ENCODE measurements at regions of chr6 and their contacts with region 1.

Region 1: DNA sequence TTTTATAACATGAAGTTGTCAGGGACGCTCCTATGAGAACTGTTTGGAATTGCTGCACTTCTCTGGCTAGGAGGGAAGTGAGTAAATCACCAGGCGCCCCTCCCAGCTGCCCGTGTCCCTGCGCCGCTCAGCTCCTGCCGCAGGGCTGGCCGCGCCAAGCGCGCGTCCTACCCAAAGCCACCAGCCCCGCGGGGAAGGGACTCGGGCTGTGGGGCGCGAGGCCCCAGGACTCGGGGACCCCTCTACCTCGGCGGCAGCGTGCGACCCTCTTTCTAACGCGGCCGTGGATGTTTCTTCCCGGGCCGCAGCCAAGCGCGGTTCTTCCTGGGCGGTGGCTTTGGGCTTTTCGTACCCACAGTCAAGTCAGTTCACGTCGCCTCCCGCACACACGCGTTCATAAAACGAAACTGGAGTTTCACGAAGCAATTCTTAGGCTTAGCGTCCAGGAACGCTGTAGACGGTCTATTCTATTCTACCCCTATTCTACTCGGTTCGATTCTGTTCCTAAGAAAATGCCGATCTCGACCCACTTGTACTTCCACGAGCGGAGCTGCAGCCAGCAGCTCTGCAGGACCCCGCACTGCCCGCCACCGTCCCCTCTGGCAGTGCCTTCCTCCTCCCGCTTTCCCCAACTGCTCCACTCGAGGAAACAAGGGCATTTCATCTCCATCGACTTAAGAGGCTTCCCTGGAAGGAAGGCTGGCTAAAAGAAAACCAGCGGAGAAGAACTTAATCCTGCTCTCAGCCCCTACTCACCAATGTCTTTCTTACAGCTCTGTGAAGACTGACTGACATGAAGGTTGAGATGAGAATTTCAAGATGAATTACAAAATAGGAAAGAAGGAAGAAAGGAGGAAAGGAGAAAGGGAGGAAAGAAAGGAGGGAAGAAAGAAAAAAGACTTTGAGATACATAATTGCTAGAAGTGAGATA is 15.4 kb downstream of the FOXC1 start:
- DNase-seq: peak; percentile 80

Region 2: DNA sequence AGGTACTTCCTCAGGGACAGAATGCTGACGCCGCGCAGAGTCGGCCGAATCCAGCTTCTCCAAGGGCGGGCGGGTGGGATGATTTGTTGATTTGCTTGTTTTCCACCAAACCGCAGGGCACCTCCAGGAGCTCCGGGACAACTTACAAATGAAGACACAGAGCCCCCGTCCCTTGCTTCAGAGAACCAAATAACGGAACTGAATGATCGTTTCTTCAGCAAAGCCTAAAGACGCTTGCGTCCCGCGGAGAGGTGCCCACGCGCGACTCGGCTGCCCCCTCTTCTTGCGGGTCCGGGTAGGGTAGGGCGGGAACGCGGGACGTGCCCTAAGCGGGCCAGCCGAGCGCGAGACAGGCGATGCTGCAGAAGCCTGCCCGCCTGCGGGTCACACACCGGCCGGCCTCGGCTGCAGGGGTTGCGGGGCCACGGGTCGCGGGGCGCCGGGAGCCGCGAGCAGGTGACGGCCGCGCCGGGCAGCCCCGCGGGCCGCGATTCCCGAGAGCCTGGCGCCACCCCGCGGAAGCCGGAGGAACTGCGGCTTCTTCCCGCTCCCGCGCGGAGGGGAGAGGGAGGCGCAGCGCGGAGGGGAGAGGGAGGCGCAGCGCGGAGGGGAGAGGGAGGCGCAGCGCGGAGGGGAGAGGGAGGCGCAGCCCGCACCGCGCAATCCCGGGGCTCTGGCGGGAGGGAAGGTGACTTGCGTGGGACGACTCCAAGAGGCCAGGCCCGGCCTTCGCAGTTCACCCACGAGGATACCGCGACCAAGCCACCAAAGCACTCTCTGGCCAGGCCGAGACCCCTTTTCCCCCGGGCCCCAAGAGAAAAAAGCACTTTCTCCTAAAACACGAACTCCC is 243.4 kb before region 1 on chr6:
- intact Hi-C with region 1: no loop called
- DNase-seq: no peak

Region 3: DNA sequence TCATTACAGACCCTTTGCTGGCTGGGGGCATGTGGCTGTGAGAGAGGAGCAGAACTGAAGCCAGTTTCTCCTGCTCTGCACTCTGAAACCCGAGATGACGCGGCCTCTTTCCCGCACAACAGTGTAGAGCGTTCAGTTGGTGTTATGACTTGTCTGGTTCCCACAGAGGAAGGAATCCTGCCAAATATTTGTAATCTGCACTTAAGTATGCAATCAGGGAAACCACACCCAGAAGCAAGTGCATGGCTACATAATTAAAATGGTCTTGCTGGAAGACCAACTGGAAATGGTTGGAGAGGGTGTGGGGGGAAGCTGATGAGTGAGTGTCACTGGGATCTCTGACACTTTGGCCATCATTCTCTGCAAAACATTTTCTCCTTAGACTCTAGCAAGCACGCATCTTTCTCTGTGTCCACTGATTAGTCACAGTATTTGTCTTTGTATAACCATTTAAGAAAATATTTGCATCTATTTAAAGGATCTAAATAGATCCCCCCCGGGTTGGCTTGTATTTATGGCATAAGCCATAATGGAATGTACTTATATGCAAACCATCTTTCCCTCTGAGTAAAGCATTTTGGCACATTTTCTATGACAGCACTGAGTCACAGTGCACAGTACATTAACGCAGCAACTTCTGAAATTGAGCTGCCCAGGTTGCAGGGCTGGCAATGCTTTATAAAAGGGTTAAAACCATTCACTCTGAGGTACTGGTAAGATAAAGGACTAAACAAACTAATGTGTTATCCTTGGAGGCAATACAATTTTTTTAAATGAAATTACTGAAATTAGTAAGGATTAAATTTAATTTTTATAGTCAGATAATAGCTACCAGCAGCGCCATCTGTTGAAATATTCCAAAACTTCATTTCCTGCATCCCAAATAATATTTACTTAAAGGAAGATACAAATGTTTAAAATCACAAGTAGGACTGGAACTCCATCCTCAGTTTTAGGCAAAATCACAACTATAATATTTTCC is 61.3 kb after region 1 on chr6:
- intact Hi-C with region 1: loop called (anchors 5 kb)
- DNase-seq: no peak

Measured in cardiac septum (tissue), 1 donor.